ENCODE measurements at regions of chr17 and their contacts with region 1.

Region 1: DNA sequence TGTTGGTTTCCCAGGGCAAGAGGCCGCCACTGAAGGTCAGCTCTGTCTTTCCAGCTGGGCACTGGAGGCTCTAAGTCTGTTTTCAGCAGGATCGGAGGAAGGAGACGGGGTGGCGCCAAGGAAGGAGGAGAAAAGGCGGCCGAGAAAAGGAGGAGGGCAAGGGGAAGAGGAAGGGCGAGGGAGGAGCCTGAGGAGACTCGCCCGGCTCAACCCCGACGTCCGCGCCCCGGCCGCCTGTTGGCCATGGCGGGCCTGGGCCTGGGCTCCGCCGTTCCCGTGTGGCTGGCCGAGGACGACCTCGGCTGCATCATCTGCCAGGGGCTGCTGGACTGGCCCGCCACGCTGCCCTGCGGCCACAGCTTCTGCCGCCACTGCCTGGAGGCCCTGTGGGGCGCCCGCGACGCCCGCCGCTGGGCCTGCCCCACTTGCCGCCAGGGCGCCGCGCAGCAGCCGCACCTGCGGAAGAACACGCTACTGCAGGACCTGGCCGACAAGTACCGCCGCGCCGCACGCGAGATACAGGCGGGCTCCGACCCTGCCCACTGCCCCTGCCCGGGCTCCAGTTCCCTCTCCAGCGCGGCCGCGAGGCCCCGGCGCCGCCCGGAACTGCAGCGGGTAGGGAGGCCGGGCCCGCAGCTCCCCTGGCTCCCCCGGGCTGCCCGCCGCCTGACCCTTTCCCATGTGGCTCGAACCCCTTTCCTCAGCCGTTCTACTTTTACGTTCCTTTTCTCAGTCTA is at the start of gene RNF135:
- DNase-seq: peak; percentile 62
- H3K4me3 Mint-ChIP-seq: peak within 1 kb of the TSS; percentile 98
- H3K27ac Mint-ChIP-seq: peak within 1 kb of the TSS; percentile 96
- H3K4me1 Mint-ChIP-seq: peaks cover 22% of the 10 kb centered on the region
- H3K27me3 Mint-ChIP-seq: no peaks in the 10 kb centered on the region
- total RNA-seq, gene RNF135: 8.6 and 10.6 TPM in 2 replicates

Region 2: GRCh38 chr17:30586818-30587595 is 384.0 kb before region 1 on chr17:
- intact Hi-C with region 1: no loop called
- DNase-seq: no peak
- H3K4me3 Mint-ChIP-seq: no peak overlapping the region
- H3K27ac Mint-ChIP-seq: no peak overlapping the region
- H3K4me1 Mint-ChIP-seq: peaks cover 6% of the 10 kb centered on the region
- H3K27me3 Mint-ChIP-seq: peaks cover 5% of the 10 kb centered on the region

Region 3: DNA sequence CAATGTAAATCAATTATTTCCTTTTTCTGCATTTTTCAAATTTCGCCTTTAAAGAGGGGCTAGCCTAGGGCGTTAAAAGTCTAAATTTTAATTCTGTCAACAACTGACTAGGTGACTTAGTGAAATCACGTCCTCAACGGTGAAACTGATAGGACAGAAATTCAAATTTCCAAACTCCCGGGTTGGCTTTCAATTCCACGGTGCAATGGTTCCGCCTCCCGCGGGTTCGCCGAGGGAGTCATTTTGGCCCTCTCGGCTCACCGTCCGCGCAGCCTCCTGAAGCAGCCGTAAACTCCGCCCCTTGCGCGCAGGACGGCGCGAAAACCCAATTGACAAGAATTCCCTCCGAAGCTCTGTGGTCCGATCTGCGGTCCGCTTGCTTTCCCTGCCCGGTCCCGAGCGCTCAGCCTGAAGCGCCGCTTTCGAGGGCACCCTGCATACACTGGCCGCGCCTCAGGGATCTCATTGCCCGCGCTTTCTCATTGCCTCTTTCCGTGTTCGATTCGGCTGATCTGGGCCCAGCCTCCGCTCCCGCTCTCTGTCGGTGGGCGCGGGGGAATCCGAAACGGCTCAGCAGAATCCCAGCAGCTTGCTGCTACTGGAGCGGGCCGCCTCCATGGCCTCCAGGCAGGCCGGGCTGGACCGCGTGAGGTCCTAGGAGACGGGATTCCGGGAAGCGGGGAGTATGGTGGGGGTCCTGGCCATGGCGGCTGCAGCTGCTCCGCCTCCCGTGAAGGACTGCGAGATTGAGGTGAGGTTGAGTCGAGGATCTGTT is 139.1 kb before region 1 on chr17 and contains the start of gene ATAD5:
- intact Hi-C with region 1: loop called (anchors 5 kb)
- DNase-seq: peak; percentile 86
- H3K4me3 Mint-ChIP-seq: peak within 1 kb of the TSS; percentile 96
- H3K27ac Mint-ChIP-seq: peak within 1 kb of the TSS; percentile 86
- H3K4me1 Mint-ChIP-seq: peaks cover 43% of the 10 kb centered on the region
- H3K27me3 Mint-ChIP-seq: no peaks in the 10 kb centered on the region
- total RNA-seq, gene ATAD5: 26.2 and 28.7 TPM in 2 replicates

Region 4: GRCh38 chr17:30906101-30906911 is 64.7 kb before region 1 on chr17 and contains the start of gene TEFM:
- intact Hi-C with region 1: loop called (anchors 1 kb)
- DNase-seq: peak; percentile 86
- H3K4me3 Mint-ChIP-seq: peak within 1 kb of the TSS; percentile 98
- H3K27ac Mint-ChIP-seq: peak within 1 kb of the TSS; percentile 87
- H3K4me1 Mint-ChIP-seq: peaks cover 35% of the 10 kb centered on the region
- H3K27me3 Mint-ChIP-seq: no peaks in the 10 kb centered on the region
- total RNA-seq, gene TEFM: 16.9 and 19.5 TPM in 2 replicates

Region 5: DNA sequence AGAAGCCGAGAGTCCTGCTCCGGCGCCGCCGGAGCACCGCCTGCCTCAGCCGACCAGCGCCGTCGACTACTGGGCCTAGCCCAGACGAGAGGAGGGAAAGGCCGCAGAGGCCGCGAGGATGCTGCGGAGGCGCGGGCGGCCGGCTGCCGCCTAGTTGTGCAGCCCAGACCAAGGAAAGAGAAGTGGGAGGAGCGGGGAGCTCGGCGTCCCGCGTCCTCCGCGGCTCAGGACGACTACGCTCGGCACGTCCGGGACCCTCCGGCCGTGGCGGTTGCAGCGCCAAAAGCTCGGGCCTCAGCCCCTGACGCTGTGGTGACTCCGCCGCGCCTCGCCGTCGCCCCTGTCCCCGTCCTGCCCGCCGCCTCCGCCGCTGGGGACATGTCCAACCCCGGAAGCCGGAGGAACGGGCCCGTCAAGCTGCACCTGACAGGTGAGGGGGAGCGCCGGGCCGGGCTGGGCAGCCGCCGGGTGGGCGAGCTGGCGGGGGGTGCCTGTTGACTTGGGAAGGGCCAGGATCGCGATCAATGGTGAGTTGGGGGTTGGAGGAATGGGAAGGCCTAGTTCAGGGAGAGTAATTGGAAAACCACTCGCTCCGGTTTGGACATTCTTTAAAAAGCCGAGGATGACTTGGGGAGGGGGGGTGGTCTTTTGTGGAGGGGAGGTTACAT is 37.5 kb after region 1 on chr17:
- intact Hi-C with region 1: loop called (anchors 1 kb)
- DNase-seq: peak; percentile 43
- H3K4me3 Mint-ChIP-seq: peak overlapping the region; percentile 85
- H3K27ac Mint-ChIP-seq: peak overlapping the region; percentile 70
- H3K4me1 Mint-ChIP-seq: peaks cover 30% of the 10 kb centered on the region
- H3K27me3 Mint-ChIP-seq: peaks cover 16% of the 10 kb centered on the region

Region 6: GRCh38 chr17:31313982-31314784 is 343.2 kb after region 1 on chr17 and contains the start of gene EVI2B:
- intact Hi-C with region 1: loop called (anchors 5 kb)
- DNase-seq: no peak
- H3K4me3 Mint-ChIP-seq: peak within 1 kb of the TSS; percentile 92
- H3K27ac Mint-ChIP-seq: peak within 1 kb of the TSS; percentile 90
- H3K4me1 Mint-ChIP-seq: peaks cover 74% of the 10 kb centered on the region
- H3K27me3 Mint-ChIP-seq: no peaks in the 10 kb centered on the region
- total RNA-seq, gene EVI2B: 21.7 and 25.1 TPM in 2 replicates